OCI-LY7 (cell line): ENCODE measurements at regions of chr15 and their contacts with region 1.

Region 1: DNA sequence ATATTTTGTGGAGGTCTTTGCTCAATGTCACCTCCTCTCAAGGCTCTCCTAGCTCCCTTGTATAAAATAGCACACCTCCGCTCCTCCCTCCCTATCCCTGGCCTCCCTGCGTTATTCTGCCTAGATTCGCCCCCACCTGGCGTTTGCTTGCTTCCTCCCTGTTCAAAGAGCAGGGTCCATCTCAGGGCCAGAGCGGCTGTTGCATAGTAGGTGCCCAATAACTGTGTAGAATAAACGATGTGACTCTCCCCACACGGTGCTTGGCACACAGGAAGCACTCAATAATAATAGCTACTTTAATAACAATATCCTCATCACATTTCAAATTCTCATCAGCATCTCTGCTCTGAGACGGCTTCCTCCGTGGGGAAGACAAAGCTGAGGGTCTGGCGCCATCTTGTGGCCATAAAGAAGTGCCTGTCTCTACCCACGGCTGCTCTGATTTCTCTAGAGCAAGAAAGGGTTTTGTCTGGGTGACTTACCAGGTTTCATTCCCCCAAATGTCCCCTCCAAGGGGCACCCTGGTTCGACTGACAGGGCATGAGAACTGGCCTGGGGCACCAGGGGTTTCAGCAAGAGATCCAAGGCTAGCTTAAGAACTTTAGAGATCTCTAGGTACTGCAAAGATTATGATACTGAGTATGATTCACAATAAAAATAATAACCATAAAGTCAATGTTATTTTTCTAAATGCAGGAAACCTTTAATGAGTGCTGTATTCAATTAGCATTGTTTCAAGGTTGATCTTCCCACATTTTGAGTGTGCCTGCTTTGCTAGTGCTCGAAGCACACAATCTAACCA is 16.1 kb downstream of the CD276 start:
- DNase-seq: peak; percentile 80
- H3K4me3 ChIP-seq: no peak overlapping the region
- H3K27ac ChIP-seq: no peak overlapping the region
- H3K4me1 ChIP-seq: peaks cover 10% of the 10 kb centered on the region
- CTCF ChIP-seq: peak; percentile 98

Region 2: DNA sequence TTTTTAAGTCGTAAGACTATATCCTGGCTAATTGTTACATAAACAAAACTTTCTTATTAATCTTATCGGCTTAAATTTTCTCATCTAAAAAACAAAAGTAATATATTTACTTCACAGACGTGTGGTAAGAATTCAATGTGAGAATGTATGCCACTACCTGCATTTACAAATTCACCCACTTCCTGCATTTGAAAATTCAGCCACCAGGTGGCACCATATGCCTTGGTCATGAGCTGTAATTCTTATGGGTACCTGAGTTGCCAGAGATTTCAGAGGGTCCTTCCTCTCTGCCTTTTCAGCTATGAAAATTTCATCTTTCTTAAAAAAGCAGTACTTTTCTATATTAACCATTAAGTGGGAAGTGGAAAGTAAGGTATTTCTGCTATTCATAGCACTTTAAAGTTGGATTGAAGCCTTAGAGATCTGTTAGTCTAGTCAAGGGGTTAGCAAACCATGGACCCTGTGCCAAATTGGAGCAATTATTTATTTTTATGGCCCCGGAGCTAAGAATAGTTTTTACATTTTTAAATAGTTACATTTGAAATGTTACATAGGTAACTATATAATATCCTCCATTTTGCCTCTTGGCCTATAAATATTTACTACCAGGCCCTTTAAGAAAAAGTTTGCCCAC is 459.3 kb before region 1 on chr15:
- CTCF ChIA-PET with region 1: interaction called, 4 read pairs
- POLR2A ChIA-PET with region 1: no interaction called
- intact Hi-C with region 1: loop called (anchors 5 kb)
- DNase-seq: peak; percentile 67
- H3K4me3 ChIP-seq: no peak overlapping the region
- H3K27ac ChIP-seq: no peak overlapping the region
- H3K4me1 ChIP-seq: no peaks in the 10 kb centered on the region
- CTCF ChIP-seq: peak; percentile 97

Region 3: DNA sequence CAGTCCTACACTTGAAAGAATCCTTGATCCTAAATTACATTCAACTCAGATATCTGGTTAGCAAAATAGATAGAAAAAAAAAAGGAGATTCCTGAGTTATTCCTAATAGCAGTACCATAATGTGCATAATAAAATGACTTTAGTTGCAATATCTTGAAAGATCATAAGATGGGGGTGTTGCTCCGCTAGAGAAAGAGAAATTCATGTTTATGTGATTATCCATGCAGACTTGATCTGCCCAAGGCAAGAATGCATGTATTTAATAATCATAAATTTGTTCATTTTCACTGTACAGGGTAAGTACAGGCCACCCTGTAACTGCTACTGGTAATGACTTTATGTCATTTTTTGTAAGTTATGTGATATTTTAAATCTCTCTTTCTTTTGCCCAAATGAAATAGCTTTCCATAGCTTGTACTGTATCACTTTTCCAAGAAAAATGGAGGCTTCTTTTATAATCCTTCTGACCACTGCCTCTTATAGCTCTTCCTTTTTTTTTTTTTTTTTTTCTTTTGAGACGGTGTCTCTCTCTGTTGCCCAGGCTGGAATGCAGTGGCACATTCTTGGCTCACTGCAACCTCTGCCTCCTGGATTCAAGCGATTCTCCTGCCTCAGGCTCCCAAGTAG is 416.0 kb before region 1 on chr15:
- CTCF ChIA-PET with region 1: no interaction called
- POLR2A ChIA-PET with region 1: no interaction called
- intact Hi-C with region 1: loop called (anchors 5 kb)
- DNase-seq: peak; percentile 16
- H3K4me3 ChIP-seq: no peak overlapping the region
- H3K27ac ChIP-seq: no peak overlapping the region
- H3K4me1 ChIP-seq: peaks cover 10% of the 10 kb centered on the region
- CTCF ChIP-seq: peak; percentile 64

Region 4: GRCh38 chr15:73305331-73306211 is 394.7 kb before region 1 on chr15:
- CTCF ChIA-PET with region 1: interaction called, 4 read pairs
- POLR2A ChIA-PET with region 1: no interaction called
- intact Hi-C with region 1: loop called (anchors 5 kb)
- DNase-seq: peak; percentile 45
- H3K4me3 ChIP-seq: no peak overlapping the region
- H3K27ac ChIP-seq: no peak overlapping the region
- H3K4me1 ChIP-seq: no peaks in the 10 kb centered on the region
- CTCF ChIP-seq: peak; percentile 77

Region 5: GRCh38 chr15:73560501-73561117 is 139.6 kb before region 1 on chr15:
- CTCF ChIA-PET with region 1: no interaction called
- POLR2A ChIA-PET with region 1: no interaction called
- intact Hi-C with region 1: loop called (anchors 1 kb)
- DNase-seq: peak; percentile 68
- H3K4me3 ChIP-seq: no peak overlapping the region
- H3K27ac ChIP-seq: no peak overlapping the region
- H3K4me1 ChIP-seq: no peaks in the 10 kb centered on the region
- CTCF ChIP-seq: peak; percentile 77

Region 6: GRCh38 chr15:73633111-73633990 is 66.9 kb before region 1 on chr15 and contains the start of gene NPTN:
- CTCF ChIA-PET with region 1: interaction called, 5 read pairs
- POLR2A ChIA-PET with region 1: no interaction called
- intact Hi-C with region 1: loop called (anchors 1 kb)
- DNase-seq: peak; percentile 98
- H3K4me3 ChIP-seq: peak within 1 kb of the TSS; percentile 96
- H3K27ac ChIP-seq: no peak within 1 kb of the TSS
- H3K4me1 ChIP-seq: peaks cover 43% of the 10 kb centered on the region
- CTCF ChIP-seq: 0 out of 2 replicates have a peak, but pooled peaks have one; percentile 11
- total RNA-seq, gene NPTN: 36.0 and 41.5 TPM in 2 replicates

Region 7: GRCh38 chr15:73677146-73677607 is 23.1 kb before region 1 on chr15:
- CTCF ChIA-PET with region 1: interaction called, 5 read pairs
- POLR2A ChIA-PET with region 1: no interaction called
- intact Hi-C with region 1: loop called (anchors 1 kb)
- DNase-seq: peak; percentile 50
- H3K4me3 ChIP-seq: no peak overlapping the region
- H3K27ac ChIP-seq: no peak overlapping the region
- H3K4me1 ChIP-seq: no peaks in the 10 kb centered on the region
- CTCF ChIP-seq: peak; percentile 84